AG04450 (cell line): ENCODE measurements at regions of chr18 and their contacts with region 1.

Region 1: DNA sequence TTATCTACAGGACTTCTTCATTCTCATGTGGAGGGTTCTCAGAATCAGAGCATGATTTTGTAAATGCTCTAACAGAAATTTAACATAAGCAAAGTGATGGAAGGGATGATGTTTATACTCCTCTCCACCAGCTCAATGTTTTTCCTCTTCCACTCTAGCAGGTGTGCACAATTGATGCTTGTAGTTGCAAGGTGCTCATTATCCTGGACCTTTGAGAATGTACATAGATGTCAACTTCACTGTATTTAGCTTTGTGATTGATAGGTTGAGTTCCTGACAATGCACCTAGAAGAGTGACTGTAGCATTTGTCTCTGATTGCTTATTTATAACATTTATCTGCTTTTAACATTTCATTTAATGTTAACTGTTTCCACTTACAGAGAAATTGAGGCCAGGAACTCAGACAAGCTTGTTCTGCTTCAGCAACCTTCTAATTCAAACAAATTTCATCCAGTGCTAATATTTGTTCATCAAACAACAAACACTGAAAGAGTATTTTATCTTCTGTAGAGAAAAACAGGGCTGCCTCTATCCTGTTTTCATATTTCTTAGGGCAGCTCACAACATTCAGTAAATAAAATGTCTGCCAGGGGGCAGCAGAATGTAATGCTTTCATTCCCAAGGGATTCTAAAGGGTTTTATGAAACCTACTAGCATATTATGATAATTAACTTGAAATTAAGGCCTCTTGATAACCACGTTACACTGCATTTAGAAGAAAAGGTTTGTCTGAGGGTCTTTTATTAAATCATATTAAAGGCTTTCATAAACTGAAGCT is 127.9 kb upstream of the NOL4 start:
- DNase-seq: no peak
- H3K4me3 ChIP-seq: no peak overlapping the region
- H3K27ac ChIP-seq: no peak overlapping the region
- H3K27me3 ChIP-seq: no peaks in the 10 kb centered on the region
- CTCF ChIP-seq: peak; percentile 21

Region 2: GRCh38 chr18:34370704-34371405 is 18.3 kb after region 1 on chr18:
- CTCF ChIA-PET with region 1: no interaction called
- POLR2A ChIA-PET with region 1: no interaction called
- DNase-seq: no peak
- H3K4me3 ChIP-seq: no peak overlapping the region
- H3K27ac ChIP-seq: no peak overlapping the region
- H3K27me3 ChIP-seq: no peaks in the 10 kb centered on the region
- CTCF ChIP-seq: no peak

Region 3: DNA sequence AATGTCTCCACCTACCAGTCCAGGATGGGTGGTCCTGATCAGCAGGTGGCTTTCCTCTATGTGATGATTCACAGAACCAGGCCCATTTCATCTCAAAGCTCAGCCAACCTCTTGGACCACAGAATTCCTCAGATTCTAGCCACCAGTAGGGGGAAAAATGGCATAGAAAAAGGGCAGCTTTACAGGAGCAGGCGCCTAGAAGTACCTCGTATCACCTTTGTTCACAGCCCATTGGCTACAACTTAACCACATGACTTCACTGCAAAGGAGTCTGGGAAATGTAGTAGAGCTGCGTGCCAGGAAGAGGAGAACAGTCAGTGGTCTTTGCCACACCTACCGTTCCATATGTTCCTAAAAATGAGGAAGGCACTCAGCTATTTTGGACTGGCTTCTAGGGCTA is 294.7 kb after region 1 on chr18:
- CTCF ChIA-PET with region 1: interaction called, 10 read pairs
- POLR2A ChIA-PET with region 1: no interaction called
- DNase-seq: no peak
- H3K4me3 ChIP-seq: no peak overlapping the region
- H3K27ac ChIP-seq: no peak overlapping the region
- H3K27me3 ChIP-seq: no peaks in the 10 kb centered on the region
- CTCF ChIP-seq: no peak

Region 4: DNA sequence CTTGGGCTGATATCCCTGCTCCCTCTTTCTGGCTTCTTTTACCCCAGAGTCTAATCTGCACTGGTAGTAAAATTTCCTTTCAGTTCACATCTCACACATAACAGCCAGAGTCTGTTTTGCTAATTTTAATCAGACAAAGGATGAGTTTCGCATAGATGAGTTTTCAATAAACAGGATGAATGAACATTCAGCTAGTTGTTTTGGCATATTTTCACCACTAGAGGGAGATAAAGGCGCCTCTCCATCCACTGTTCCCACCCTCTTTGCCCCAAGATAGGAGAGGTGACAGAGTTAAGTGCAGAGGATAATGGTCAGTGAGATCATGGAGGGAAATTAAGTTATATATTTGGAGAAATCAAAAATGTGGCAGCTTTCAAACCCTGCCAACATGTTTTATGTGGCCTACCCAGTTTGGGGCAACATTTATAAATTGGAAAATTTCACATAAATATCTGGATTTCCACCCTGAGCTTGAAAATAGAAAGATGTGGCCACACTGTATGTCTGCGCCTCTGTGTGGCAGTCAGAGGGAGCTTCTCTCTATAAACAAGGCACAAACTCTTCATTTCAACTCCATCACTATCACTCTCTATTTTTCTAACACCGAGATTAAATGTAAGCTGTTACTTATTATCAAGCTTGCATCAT is 309.0 kb after region 1 on chr18:
- CTCF ChIA-PET with region 1: no interaction called
- POLR2A ChIA-PET with region 1: no interaction called
- DNase-seq: peak; percentile 7
- H3K4me3 ChIP-seq: no peak overlapping the region
- H3K27ac ChIP-seq: no peak overlapping the region
- H3K27me3 ChIP-seq: no peaks in the 10 kb centered on the region
- CTCF ChIP-seq: peak; percentile 90